ENCODE measurements at regions of chr1 and their contacts with region 1.

Region 1: GRCh38 chr1:28329395-28330153 is 734 bp downstream of the MED18 start:
- DNase-seq: peak in 2 of 4 donors; percentile 9 to 83
- ATAC-seq: peak; percentile 48
- H3K4me3 ChIP-seq: peak overlapping the region; percentile 56 to 59
- H3K27ac ChIP-seq: peak overlapping the region; percentile 86 to 95
- H3K4me1 ChIP-seq: peaks cover 9 to 37% of the 10 kb centered on the region in 2 donors
- H3K27me3 ChIP-seq: no peaks in the 10 kb centered on the region
- CTCF ChIP-seq: no peak

Region 2: GRCh38 chr1:28259307-28260167 is 70.0 kb before region 1 on chr1 and contains the start of gene SESN2:
- intact Hi-C with region 1: loop called in 1 of 2 experiments (anchors 10 kb)
- DNase-seq: peak; percentile 96 to 99 (median 99)
- ATAC-seq: peak; percentile 97
- H3K4me3 ChIP-seq: peak within 1 kb of the TSS; percentile 98 to 99
- H3K27ac ChIP-seq: peak within 1 kb of the TSS; percentile 84 to 88
- H3K4me1 ChIP-seq: peaks cover 10 to 49% of the 10 kb centered on the region in 2 donors
- H3K27me3 ChIP-seq: no peaks in the 10 kb centered on the region
- CTCF ChIP-seq: no peak
- polyA plus RNA-seq, gene SESN2: 4.6 to 7.8 (median 5.8) TPM